Right lobe of liver (tissue), 6 donors: ENCODE measurements at regions of chr17 and their contacts with region 1.

Region 1: DNA sequence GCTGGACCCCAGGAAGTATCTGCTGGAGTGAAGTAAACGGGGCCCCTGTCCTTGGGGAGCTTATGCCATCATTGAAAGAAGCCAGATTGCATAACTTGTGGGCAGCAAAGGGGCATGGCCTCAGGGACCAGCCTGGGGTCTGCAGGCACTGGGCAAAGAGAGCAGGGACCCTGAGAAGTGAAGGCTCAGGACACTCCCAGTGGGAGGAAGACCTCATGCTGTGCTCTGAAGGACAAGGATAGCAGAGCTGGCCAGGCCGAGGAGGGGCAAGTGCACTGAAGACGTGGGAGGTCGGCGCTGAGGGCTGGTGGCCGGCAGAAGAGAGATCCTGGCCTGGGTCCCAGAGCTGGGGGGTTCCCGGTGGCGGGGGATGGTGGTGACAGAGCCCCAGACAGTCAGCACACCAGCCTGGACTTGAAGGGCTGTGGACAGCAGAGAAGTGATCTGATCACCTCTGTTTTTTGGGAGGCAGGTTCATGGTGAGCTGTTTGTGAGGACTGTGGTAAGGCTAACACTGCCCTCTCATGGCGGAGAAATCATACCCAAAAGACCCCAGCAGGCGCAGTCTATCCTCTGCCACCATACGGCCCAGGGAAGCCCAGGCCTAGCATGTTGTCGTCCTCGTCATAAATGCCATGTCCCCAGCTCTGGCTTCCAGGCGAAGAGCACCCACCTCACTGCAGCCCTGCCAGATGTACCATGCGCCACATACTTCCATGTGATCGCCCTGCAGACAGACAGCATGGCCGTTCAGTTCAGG is 7.1 kb upstream of the CNP start:
- DNase-seq: no peak
- ATAC-seq: peak; percentile 80 to 84 (median 82)
- H3K4me3 ChIP-seq: no peak overlapping the region
- H3K27ac ChIP-seq: no peak overlapping the region
- H3K4me1 ChIP-seq: no peaks in the 10 kb centered on the region
- H3K27me3 ChIP-seq: no peaks in the 10 kb centered on the region
- CTCF ChIP-seq: peak; percentile 52 to 62 (median 58)
- POLR2A ChIP-seq: no peak

Region 2: DNA sequence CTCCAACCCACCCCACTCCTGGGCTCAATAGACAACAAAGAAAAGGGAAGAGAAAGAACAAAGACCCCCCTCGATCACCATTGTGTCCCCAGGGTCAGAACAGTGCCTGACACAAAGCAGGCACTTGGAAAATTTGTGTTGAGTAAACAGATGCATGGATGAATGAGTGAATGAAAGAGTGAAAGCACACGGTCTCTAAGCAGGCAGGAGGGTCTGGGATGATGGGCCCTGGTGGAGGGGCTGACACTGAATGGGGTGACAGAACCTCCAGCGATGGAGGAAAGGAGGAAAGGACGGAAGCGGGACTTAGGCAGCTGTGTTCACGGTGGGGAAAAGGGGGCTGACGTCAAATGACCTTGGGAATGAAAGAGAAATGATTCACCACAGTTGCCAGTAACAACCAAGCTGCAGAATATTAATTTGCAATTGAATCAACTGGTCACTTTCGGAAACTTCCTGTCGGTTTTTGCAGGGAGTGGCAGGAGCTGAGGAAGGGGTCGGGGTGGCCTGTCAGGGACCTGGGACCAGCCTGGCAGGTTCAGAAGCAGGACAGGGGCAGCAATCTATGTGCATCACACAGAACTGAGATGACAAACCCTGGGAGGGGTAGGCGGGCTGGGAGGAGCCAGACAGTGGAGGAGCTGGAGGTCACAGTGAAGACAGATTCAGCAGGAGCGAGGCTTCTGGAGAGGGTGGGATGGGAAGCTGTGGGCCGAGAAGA is 254.1 kb before region 1 on chr17:
- intact Hi-C with region 1: loop called in 1 of 2 experiments (anchors 5 kb)
- DNase-seq: no peak
- ATAC-seq: peak in 2 of 4 donors; percentile 19 to 26
- H3K4me3 ChIP-seq: no peak overlapping the region
- H3K27ac ChIP-seq: no peak overlapping the region
- H3K4me1 ChIP-seq: no peaks in the 10 kb centered on the region
- H3K27me3 ChIP-seq: no peaks in the 10 kb centered on the region
- CTCF ChIP-seq: no peak
- POLR2A ChIP-seq: no peak

Region 3: DNA sequence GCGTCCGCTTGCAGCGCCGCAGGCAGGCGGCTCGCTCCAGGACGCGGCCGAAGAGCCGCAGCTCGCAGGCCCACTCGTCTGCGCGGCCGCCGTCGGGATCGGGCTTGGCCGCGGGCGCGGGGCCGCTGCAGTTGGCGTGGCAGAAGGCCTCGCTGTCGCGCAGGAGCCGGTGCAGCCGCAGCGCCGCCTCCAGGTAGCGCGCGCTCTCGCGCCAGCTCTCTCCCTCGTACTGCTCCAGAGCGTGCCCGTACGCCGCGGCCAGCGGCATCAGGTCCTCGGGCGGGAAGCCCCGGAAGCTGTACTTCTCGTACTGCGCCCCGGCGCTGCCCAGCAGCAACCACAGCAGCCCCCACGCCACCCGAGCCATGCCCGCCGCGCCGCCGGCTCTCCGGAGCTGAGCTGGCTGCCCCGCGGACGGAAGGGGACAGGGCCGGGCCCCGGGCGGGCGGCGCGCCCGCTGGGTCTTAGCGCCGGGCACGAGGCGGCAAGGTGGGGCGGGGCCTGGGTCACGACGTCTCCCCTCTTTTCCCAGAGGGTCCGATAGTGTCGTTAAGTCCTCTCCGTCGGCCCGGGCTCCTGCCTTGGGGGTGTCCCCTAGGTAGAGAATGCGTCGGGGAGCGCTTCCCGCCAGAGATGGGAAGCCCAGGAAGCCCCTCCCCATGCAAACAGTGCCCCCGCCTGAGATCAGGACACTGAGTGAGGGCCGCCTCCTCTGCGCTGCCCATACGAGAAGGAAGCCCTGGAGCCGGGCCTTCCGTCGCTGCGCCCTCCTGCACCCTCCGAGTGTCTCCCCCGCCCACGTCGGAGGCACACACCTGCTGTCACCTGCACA is 147.8 kb before region 1 on chr17 and contains the start of gene P3H4:
- intact Hi-C with region 1: loop called in 1 of 2 experiments (anchors 10 kb)
- DNase-seq: peak; percentile 81 to 83 (median 82)
- ATAC-seq: peak; percentile 89 to 95 (median 93)
- H3K4me3 ChIP-seq: peak within 1 kb of the TSS; percentile 70 to 82 (median 80)
- H3K27ac ChIP-seq: peak within 1 kb of the TSS in 1 of 3 donors; percentile 13
- H3K4me1 ChIP-seq: peaks cover 0 to 10% (median 2%) of the 10 kb centered on the region in 4 donors
- H3K27me3 ChIP-seq: no peaks in the 10 kb centered on the region
- CTCF ChIP-seq: peak; percentile 55 to 80 (median 76)
- POLR2A ChIP-seq: peak; percentile 42
- total RNA-seq, gene P3H4: 1.8 to 3.8 (median 2.8) TPM

Region 4: GRCh38 chr17:41864836-41865595 is 94.5 kb before region 1 on chr17 and contains the start of gene KLHL11:
- intact Hi-C with region 1: no loop called
- DNase-seq: peak; percentile 90 to 92 (median 91)
- ATAC-seq: peak; percentile 88 to 93 (median 91)
- H3K4me3 ChIP-seq: peak within 1 kb of the TSS; percentile 74 to 100 (median 93)
- H3K27ac ChIP-seq: peak within 1 kb of the TSS; percentile 59 to 84 (median 75)
- H3K4me1 ChIP-seq: peaks cover 0 to 39% (median 13%) of the 10 kb centered on the region in 4 donors
- H3K27me3 ChIP-seq: no peaks in the 10 kb centered on the region
- CTCF ChIP-seq: peak in 1 of 4 donors; percentile 31
- POLR2A ChIP-seq: peak; percentile 91
- total RNA-seq, gene KLHL11: 2.9 to 7.0 (median 5.7) TPM

Region 5: DNA sequence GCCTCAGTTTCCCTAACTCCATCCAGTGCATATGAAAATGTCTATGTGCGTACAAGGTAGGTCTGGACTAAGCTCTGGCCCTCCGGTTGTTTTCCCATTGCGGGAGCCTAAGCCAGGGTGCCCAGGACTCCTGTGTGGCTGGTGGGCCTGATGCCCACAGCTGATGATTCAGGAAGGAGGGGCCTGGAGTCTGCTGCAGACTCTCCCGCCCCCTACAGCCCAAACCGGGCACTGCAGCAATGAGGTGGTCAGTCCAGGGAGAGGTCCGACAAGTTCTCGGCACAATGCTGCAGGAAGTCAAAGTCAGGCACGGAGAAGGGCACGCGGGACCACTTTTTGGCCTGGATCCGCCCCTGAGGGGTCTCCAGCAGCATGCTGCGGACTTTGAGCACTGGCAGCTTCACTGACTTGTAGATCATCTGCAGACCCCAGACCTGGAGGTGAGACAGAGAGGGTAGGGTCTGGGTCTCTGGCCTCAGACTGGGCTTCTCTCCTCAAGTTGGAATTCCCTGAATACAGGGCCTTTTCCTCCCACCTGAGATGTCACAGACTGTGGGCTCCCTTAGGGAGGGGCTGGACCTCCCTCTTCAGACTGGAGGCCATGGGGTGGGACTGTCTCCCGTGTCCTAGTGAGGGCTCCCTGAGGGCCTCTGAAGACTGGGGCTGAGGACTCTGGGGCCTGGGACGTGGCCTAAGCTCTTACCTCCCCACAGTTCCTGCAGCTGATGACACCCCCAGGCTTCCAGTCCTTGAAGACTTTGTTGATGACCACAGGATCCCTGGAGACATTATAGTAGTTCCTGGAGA is 142.2 kb after region 1 on chr17:
- intact Hi-C with region 1: no loop called
- DNase-seq: peak; percentile 68 to 72 (median 71)
- ATAC-seq: peak; percentile 73 to 89 (median 84)
- H3K4me3 ChIP-seq: no peak overlapping the region
- H3K27ac ChIP-seq: no peak overlapping the region
- H3K4me1 ChIP-seq: peaks cover 0 to 6% (median 0%) of the 10 kb centered on the region in 4 donors
- H3K27me3 ChIP-seq: no peaks in the 10 kb centered on the region
- CTCF ChIP-seq: peak; percentile 75 to 90 (median 80)
- POLR2A ChIP-seq: no peak

Region 6: GRCh38 chr17:42291129-42291528 is 331.6 kb after region 1 on chr17:
- intact Hi-C with region 1: no loop called
- DNase-seq: no peak
- ATAC-seq: no peak
- H3K4me3 ChIP-seq: no peak overlapping the region
- H3K27ac ChIP-seq: no peak overlapping the region
- H3K4me1 ChIP-seq: peaks cover 0 to 6% (median 2%) of the 10 kb centered on the region in 4 donors
- H3K27me3 ChIP-seq: no peaks in the 10 kb centered on the region
- CTCF ChIP-seq: no peak
- POLR2A ChIP-seq: no peak